ENCODE measurements at regions of chr2 and their contacts with region 1.

Region 1: DNA sequence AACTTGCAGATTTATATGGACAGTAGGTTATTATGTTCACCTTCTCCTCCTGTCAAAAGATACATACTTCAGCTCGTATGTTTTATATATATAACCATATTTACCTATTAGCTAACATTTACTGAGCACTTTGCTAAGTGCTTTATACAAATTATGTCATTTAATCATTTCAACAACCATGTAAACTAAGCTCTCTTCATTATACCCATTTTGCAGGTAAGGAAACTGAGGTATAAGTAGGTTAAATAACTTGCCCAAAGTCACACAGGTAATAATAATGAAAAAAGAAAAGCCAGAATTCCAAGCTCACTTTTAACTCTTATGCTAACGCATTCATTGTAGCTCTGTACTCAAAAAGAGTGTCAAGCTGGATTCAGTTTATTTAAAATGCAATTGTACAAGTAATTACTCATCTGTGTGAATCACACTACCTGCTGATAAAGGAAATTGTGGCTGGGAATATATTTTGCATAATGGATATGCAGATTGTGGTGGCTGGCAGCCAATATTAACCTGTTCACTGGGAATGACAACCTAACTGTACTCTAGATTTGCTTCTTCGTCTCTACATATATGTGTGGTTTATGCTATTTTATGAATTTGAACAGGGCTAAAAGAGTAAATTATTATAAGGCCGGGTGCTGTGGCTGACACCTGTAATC is 20.6 kb downstream of the SLC16A14 start:
- DNase-seq: no peak
- ATAC-seq: no peak
- H3K4me3 ChIP-seq: no peak overlapping the region
- H3K4me3 Mint-ChIP-seq: no peak overlapping the region
- H3K27ac ChIP-seq: no peak overlapping the region
- H3K27ac Mint-ChIP-seq: no peak overlapping the region
- H3K4me1 ChIP-seq: no peaks in the 10 kb centered on the region
- H3K4me1 Mint-ChIP-seq: no peaks in the 10 kb centered on the region
- H3K27me3 ChIP-seq: no peaks in the 10 kb centered on the region
- H3K27me3 Mint-ChIP-seq: no peaks in the 10 kb centered on the region
- CTCF ChIP-seq: no peak

Region 2: GRCh38 chr2:230068016-230068650 is 20.0 kb after region 1 on chr2:
- CTCF ChIA-PET with region 1: interaction called, 15 read pairs
- POLR2A ChIA-PET with region 1: no interaction called
- intact Hi-C with region 1: no loop called
- DNase-seq: peak in 13 of 14 experiments; percentile 5 to 63 (median 30)
- ATAC-seq: peak; percentile 45
- H3K4me3 ChIP-seq: peak overlapping the region; percentile 50
- H3K4me3 Mint-ChIP-seq: peak overlapping the region; percentile 94
- H3K27ac ChIP-seq: no peak overlapping the region
- H3K27ac Mint-ChIP-seq: peak overlapping the region; percentile 69
- H3K4me1 ChIP-seq: peaks cover 17% of the 10 kb centered on the region
- H3K4me1 Mint-ChIP-seq: peaks cover 6% of the 10 kb centered on the region
- H3K27me3 ChIP-seq: peaks cover 6 to 7% of the 10 kb centered on the region in 2 experiments
- H3K27me3 Mint-ChIP-seq: peaks cover 8% of the 10 kb centered on the region
- CTCF ChIP-seq: no peak

Region 3: DNA sequence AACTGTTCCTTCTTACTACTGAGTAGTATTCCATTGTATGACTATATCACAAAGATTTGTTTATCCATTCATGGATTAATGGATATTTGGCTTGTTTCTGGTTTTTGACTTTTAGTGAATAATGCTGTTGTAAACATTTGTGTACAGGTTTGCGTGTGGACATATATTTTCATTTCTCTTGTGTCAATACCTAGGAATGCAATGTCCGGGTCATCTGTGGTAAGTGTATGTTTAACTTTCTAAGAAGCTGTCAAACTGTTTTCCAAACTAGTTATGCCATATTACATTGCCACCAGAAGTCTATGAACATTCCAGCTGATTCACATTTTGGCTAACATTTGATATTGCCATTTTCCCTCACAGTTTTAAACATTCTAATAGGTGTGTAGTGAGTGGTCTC is 49.7 kb after region 1 on chr2:
- CTCF ChIA-PET with region 1: no interaction called
- POLR2A ChIA-PET with region 1: no interaction called
- intact Hi-C with region 1: no loop called
- DNase-seq: no peak
- ATAC-seq: no peak
- H3K4me3 ChIP-seq: no peak overlapping the region
- H3K4me3 Mint-ChIP-seq: no peak overlapping the region
- H3K27ac ChIP-seq: no peak overlapping the region
- H3K27ac Mint-ChIP-seq: no peak overlapping the region
- H3K4me1 ChIP-seq: no peaks in the 10 kb centered on the region
- H3K4me1 Mint-ChIP-seq: no peaks in the 10 kb centered on the region
- H3K27me3 ChIP-seq: no peaks in the 10 kb centered on the region
- H3K27me3 Mint-ChIP-seq: peaks cover 4% of the 10 kb centered on the region
- CTCF ChIP-seq: no peak